MCF 10A (cell line): ENCODE measurements at regions of chr1 and their contacts with region 1.

Region 1: DNA sequence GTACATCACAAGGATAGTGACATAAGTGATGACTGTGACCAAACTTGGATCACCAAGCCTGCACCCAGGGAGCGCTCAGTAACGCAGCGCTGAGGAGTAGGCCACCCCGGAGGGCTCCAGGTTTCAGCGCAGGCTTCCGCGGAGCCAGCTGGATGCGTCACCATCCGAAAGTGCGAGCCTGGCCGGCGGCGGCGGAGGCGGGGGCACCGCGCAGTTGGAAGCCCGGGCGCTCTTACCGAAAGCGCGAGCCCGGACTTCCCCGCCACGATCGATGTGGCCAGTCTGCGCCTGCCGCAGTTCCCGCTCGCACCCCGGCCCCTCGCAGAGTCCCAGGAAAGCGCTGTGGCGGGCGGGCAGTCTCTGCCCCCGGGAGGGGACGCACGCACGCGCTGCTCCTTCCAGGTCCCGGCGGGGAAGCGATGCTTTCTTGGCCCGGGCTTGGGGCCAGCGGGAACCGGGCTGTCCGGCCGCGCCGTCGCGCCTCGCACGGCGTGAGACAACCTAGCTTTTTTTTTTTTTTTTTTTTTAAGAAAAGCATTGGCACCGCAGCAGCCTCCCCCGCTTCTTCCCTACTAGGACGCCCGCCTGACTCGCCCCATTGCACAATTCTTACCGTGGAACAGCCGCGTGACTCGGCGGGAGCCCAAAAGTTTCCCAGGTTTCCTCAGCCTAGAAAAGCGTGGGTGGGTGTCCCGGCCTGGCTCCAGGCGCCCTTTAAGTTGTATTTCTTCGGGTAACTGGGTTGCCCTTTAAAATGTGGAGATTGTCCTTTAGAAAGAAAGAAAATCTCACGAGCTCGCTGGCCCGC is 36.4 kb upstream of the JAK1 start:
- DNase-seq: peak; percentile 86
- H3K4me3 Mint-ChIP-seq: peak overlapping the region; percentile 72
- H3K27ac Mint-ChIP-seq: peak overlapping the region; percentile 74
- H3K4me1 Mint-ChIP-seq: peaks cover 18% of the 10 kb centered on the region
- H3K27me3 Mint-ChIP-seq: no peaks in the 10 kb centered on the region
- CTCF ChIP-seq: no peak

Region 2: DNA sequence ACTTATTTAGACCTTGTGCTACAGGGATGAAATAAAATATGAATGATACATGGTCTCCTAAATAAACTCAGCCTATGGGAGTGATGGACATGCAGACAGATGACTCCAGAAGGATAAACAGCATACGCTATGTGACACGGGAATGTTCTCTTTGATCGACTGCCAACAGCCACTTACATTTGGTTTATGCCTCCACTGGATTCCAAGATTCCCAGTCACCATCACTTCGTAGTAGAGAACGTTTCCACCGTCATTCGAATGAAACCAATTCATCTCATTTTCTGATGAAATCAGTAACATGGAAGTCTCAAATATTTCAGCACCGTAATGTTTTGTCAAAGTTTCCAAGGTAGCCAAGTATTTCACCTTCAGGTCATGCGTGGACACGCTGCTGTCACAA is 136.0 kb before region 1 on chr1:
- CTCF ChIA-PET with region 1: no interaction called
- POLR2A ChIA-PET with region 1: no interaction called
- intact Hi-C with region 1: no loop called
- DNase-seq: no peak
- H3K4me3 Mint-ChIP-seq: no peak overlapping the region
- H3K27ac Mint-ChIP-seq: no peak overlapping the region
- H3K4me1 Mint-ChIP-seq: no peaks in the 10 kb centered on the region
- H3K27me3 Mint-ChIP-seq: no peaks in the 10 kb centered on the region
- CTCF ChIP-seq: no peak

Region 3: GRCh38 chr1:64891448-64891825 is 111.3 kb before region 1 on chr1:
- CTCF ChIA-PET with region 1: no interaction called
- POLR2A ChIA-PET with region 1: no interaction called
- intact Hi-C with region 1: no loop called
- DNase-seq: no peak
- H3K4me3 Mint-ChIP-seq: no peak overlapping the region
- H3K27ac Mint-ChIP-seq: no peak overlapping the region
- H3K4me1 Mint-ChIP-seq: peaks cover 21% of the 10 kb centered on the region
- H3K27me3 Mint-ChIP-seq: no peaks in the 10 kb centered on the region
- CTCF ChIP-seq: no peak

Region 4: DNA sequence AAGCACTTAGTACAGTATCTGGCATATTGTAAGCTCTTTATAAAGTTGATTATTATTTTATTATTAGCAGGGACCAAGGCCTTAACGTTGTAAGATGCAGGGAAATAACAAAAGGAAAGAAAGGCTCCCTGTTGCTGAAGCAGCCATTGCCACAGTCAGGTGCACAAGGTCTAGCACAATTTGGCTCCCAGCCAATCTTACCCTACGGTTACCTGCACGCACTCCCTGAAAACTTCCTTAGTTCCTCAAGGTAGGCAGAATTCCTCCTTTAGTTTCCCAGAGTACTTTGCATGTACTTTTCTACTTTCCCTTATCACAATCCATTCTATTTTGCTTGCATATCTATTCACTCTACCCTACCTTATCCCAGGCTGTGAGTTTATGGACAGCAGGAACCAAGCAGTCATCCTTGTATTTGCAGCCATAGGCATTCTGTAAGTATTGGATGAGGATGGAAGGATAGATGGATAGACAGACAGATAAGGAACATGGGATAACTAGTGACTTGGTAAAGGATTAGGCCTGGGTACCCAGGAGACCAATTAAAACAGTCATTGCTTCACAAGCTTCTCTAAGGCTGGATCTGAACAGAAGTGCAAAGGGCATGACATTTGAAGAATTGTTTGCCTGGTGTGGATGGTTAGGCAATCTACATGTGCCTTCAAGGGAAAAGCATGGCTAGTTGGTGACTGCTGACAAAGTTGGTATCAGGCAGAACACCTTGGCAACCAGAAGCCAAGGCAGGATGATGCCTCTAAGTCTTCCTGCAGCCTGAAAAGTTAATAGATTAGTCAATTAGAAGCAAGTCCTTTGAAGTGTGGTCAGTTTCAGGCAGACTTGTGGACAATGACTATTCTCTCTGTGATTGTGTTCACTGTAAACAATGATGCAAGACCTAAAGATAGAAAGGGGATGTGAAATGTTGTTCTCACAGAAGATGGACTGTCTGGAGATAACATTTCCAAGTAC is 15.5 kb before region 1 on chr1:
- CTCF ChIA-PET with region 1: interaction called, 3 read pairs
- POLR2A ChIA-PET with region 1: interaction called, 11 read pairs
- intact Hi-C with region 1: no loop called
- DNase-seq: peak; percentile 16
- H3K4me3 Mint-ChIP-seq: no peak overlapping the region
- H3K27ac Mint-ChIP-seq: no peak overlapping the region
- H3K4me1 Mint-ChIP-seq: peaks cover 19% of the 10 kb centered on the region
- H3K27me3 Mint-ChIP-seq: no peaks in the 10 kb centered on the region
- CTCF ChIP-seq: no peak